Heart right ventricle (tissue), 16 donors: ENCODE measurements at regions of chr15 and their contacts with region 1.

Region 1: DNA sequence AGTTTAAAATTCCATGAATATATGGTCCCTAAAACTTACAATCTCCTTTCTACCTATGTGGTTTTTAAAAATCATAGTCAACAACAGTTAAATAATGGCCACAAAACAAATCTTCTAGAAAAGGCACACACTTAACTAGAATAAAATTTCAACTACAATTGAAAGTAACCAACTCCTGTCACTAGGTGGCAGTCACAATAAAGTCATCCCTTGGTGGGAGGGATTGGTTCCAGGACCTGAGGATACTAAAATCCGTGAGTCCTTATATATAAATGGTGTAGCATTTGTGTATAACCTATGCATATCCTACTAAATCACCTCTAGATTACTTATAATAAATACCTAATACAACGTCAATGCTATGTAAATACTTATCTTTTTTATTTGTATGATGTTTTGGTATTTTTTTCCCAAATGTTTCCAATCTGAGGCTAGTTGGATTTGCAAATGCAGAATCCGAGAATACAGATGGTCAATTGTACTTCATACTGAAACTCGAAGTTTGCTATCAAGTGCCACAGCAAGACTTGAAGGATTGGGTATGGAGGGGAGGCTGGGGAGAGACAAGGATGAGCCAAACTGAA is 172.6 kb downstream of the FMN1 start:
- DNase-seq: peak in 1 of 2 donors; percentile 35
- ATAC-seq: peak; percentile 53 to 86 (median 72)
- H3K4me3 ChIP-seq: no peak overlapping the region
- H3K27ac ChIP-seq: peak overlapping the region; percentile 28 to 85 (median 66)
- H3K4me1 ChIP-seq: peaks cover 0 to 31% (median 13%) of the 10 kb centered on the region in 9 donors
- H3K27me3 ChIP-seq: no peaks in the 10 kb centered on the region
- CTCF ChIP-seq: peak; percentile 19 to 71 (median 63)

Region 2: DNA sequence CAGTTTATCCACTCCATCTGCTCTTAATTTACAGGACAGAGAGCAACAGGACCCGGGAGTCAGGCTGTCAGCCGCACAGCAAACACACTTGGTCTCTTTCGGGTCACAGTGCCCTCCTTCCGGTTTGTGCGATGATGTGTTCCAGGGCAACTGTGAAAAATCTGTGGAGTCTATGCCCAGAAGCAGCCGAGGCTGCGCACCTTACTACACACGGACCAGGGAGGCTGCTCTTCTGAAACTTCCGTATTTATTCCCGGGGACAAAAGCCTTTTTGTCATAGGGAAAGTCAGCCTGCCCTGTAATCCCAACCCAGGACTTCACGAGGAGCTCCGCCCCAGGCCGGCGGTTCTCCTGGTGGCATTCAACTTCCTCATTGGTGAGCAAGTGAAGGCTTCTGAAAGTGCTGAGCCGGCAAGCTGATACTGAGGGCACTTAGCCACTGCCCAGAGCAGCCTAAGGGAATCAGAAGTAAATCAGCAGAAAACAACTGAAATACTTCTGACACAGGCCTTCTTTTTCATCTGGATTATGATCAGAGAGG is 46.1 kb after region 1 on chr15:
- intact Hi-C with region 1: loop called in 1 of 10 experiments (anchors 5 kb)
- DNase-seq: peak; percentile 34 to 46
- ATAC-seq: peak in 7 of 8 donors; percentile 47 to 88 (median 77)
- H3K4me3 ChIP-seq: peak overlapping the region in 4 of 10 donors; percentile 15 to 34 (median 24)
- H3K27ac ChIP-seq: peak overlapping the region in 1 of 10 donors; percentile 76
- H3K4me1 ChIP-seq: peaks cover 0 to 24% (median 3%) of the 10 kb centered on the region in 9 donors
- H3K27me3 ChIP-seq: peaks cover 0 to 4% (median 0%) of the 10 kb centered on the region in 7 donors
- CTCF ChIP-seq: no peak

Region 3: GRCh38 chr15:33074942-33075341 is 53.0 kb after region 1 on chr15:
- intact Hi-C with region 1: loop called in 4 of 10 experiments (anchors 2 to 5 kb)
- DNase-seq: no peak
- ATAC-seq: peak in 4 of 8 donors; percentile 56 to 73 (median 62)
- H3K4me3 ChIP-seq: no peak overlapping the region
- H3K27ac ChIP-seq: no peak overlapping the region
- H3K4me1 ChIP-seq: no peaks in the 10 kb centered on the region
- H3K27me3 ChIP-seq: no peaks in the 10 kb centered on the region
- CTCF ChIP-seq: peak in 3 of 9 donors; percentile 12 to 26 (median 13)

Region 4: DNA sequence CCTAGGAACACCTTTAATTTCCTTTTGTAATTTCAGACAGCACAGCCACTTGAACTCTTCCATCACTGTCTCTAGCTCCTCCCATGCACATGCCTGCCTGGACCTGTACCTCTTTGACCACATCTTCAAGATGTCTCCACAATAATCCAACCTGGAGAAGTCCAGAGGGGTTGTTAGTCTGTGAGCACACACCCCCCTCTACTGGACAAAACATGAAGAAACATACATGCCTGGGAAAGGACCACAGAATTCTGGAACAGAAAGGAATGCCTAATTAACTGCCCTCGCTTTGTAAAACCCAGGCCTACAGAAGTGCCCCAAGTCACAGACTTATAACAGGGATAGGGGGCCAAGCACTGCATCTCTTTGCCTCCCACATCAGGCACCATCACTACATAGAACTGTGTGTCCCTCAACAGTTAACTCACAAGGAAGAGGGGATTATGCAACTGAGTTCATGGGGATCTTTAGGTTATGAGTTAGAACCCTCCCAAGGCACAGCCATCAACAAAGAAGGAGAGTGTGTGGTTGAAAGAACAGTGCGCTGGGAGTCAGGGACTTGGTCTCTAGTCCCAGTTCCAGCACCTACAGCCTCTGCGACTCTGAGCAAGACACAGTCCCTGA is 110.9 kb after region 1 on chr15:
- intact Hi-C with region 1: loop called in 5 of 10 experiments (anchors 2 to 5 kb)
- DNase-seq: no peak
- ATAC-seq: peak; percentile 53 to 83 (median 64)
- H3K4me3 ChIP-seq: no peak overlapping the region
- H3K27ac ChIP-seq: no peak overlapping the region
- H3K4me1 ChIP-seq: peaks cover 0 to 46% (median 17%) of the 10 kb centered on the region in 9 donors
- H3K27me3 ChIP-seq: no peaks in the 10 kb centered on the region
- CTCF ChIP-seq: peak; percentile 27 to 72 (median 63)